T-cell (primary cell): ENCODE measurements at regions of chr1 and their contacts with region 1.

Region 1: DNA sequence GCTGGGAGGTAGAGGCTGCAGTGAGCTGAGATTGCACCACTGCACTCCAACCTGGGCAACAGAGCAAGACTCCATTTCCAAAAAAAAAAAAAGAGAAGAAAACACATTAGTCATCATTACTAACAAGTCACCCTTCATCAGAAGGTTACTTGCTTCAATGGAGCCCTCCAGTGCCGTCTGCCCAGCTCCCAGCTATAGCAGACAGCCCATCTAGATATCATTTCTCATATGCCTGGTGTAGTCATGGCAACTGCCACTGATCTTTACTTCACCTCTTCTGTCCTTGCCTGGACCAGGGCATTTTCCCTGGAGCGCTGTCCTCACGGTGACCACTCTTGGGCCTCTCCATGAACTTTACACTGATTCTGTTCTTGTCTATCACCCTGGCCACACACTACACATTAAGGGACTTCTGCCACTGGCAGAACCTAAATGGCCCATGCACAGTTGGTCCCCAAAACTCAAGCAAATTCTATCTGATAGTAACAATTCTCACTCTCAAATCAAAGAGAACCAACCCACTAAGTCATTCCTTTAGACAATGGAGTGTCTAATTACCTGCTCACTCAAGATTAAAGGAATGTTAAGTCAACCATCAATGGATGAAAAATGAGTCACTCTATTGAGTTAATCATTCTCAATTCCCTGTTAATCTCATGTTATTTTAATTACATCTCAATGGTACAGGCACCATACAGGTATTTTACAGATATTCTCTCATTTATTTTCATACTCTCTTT is 12.9 kb downstream of the GPA33 start:
- DNase-seq: no peak
- ATAC-seq: no peak
- H3K4me3 ChIP-seq: no peak overlapping the region
- H3K4me3 Mint-ChIP-seq: no peak overlapping the region
- H3K27ac ChIP-seq: no peak overlapping the region
- H3K27ac Mint-ChIP-seq: no peak overlapping the region
- H3K4me1 ChIP-seq: peaks cover 0 to 25% of the 10 kb centered on the region in 2 experiments
- H3K4me1 Mint-ChIP-seq: peaks cover 27 to 34% (median 33%) of the 10 kb centered on the region in 3 donors
- H3K27me3 ChIP-seq: no peaks in the 10 kb centered on the region
- H3K27me3 Mint-ChIP-seq: peaks cover 0 to 1% of the 10 kb centered on the region in 2 donors

Region 2: GRCh38 chr1:167173516-167174184 is 96.4 kb after region 1 on chr1:
- CTCF ChIA-PET with region 1: no interaction called
- POLR2A ChIA-PET with region 1: interaction called in 1 of 2 experiments, 10 read pairs
- DNase-seq: no peak
- ATAC-seq: no peak
- H3K4me3 ChIP-seq: no peak overlapping the region
- H3K4me3 Mint-ChIP-seq: no peak overlapping the region
- H3K27ac ChIP-seq: no peak overlapping the region
- H3K27ac Mint-ChIP-seq: no peak overlapping the region
- H3K4me1 ChIP-seq: no peaks in the 10 kb centered on the region
- H3K4me1 Mint-ChIP-seq: no peaks in the 10 kb centered on the region
- H3K27me3 ChIP-seq: peaks cover 0 to 14% of the 10 kb centered on the region in 2 experiments
- H3K27me3 Mint-ChIP-seq: peaks cover 15 to 26% of the 10 kb centered on the region in 2 donors